ENCODE measurements at regions of chr1 and their contacts with region 1.

Region 1: GRCh38 chr1:117674521-117675397 is 68.9 kb downstream of the TENT5C start:
- DNase-seq: no peak
- ATAC-seq: no peak
- H3K4me3 ChIP-seq: no peak overlapping the region
- H3K27ac ChIP-seq: no peak overlapping the region
- H3K4me1 ChIP-seq: no peaks in the 10 kb centered on the region
- H3K27me3 ChIP-seq: no peaks in the 10 kb centered on the region
- CTCF ChIP-seq: 0 out of 2 replicates have a peak, but pooled peaks have one; percentile 6
- EP300 ChIP-seq: no peak
- POLR2A ChIP-seq: no peak
- RAD21 ChIP-seq: no peak

Region 2: DNA sequence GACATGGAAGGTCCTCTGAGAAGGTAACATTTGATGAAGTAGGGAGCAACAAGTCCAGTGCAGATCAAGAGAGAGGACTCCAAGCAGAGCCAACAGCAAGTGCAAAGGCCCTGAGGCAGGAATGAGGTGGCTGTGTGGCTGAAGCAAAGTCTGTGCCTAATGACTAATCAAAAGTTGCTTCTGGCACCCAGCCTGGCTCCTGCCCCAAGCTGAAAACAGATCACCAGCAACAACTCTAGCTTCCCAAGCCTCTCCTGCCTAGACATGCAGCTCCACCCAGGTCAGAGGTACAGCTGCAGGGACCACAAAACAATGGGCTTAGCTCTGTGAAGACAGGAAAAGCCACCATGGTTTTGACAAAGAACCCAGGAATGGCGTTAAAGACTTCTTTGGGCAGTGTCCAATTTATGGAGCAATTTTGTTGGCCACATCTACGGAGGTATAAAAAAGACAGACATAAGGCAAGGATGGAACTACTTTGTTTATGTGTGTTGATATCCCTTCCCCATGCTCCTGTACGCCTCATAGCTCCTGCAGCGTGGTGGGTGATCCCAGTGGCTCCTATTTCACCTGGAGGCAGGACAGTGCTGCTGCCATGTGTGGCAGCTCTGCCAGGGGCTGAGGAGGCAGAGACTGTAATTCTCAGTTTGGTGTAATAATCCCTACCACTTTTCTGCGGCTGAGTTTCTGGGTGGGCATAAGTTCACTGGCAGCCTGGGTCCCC is 980.8 kb before region 1 on chr1:
- CTCF ChIA-PET with region 1: no interaction called
- POLR2A ChIA-PET with region 1: no interaction called
- in situ Hi-C with region 1: no loop called
- intact Hi-C with region 1: no loop called
- DNase-seq: no peak
- ATAC-seq: no peak
- H3K4me3 ChIP-seq: no peak overlapping the region
- H3K27ac ChIP-seq: no peak overlapping the region
- H3K4me1 ChIP-seq: peaks cover 9% of the 10 kb centered on the region
- H3K27me3 ChIP-seq: no peaks in the 10 kb centered on the region; a peak in 1 of 5 replicates
- CTCF ChIP-seq: no peak
- EP300 ChIP-seq: no peak
- POLR2A ChIP-seq: no peak
- RAD21 ChIP-seq: no peak

Region 3: GRCh38 chr1:117512743-117513321 is 161.9 kb before region 1 on chr1:
- CTCF ChIA-PET with region 1: no interaction called
- POLR2A ChIA-PET with region 1: no interaction called
- in situ Hi-C with region 1: loop called (anchors 10 kb)
- intact Hi-C with region 1: no loop called
- DNase-seq: no peak
- ATAC-seq: no peak
- H3K4me3 ChIP-seq: no peak overlapping the region
- H3K27ac ChIP-seq: no peak overlapping the region
- H3K4me1 ChIP-seq: no peaks in the 10 kb centered on the region
- H3K27me3 ChIP-seq: no peaks in the 10 kb centered on the region
- CTCF ChIP-seq: peak; percentile 52
- EP300 ChIP-seq: no peak
- POLR2A ChIP-seq: no peak
- RAD21 ChIP-seq: peak; percentile 28; the same call in 1 of the 2 replicates

Region 4: GRCh38 chr1:117534995-117535467 is 139.7 kb before region 1 on chr1:
- CTCF ChIA-PET with region 1: no interaction called
- POLR2A ChIA-PET with region 1: no interaction called
- in situ Hi-C with region 1: no loop called
- intact Hi-C with region 1: loop called (anchors 5 kb)
- DNase-seq: peak; percentile 31
- ATAC-seq: peak; percentile 89
- H3K4me3 ChIP-seq: no peak overlapping the region
- H3K27ac ChIP-seq: no peak overlapping the region
- H3K4me1 ChIP-seq: peaks cover 5% of the 10 kb centered on the region; the same call in 1 of the 2 replicates
- H3K27me3 ChIP-seq: no peaks in the 10 kb centered on the region
- CTCF ChIP-seq: peak; percentile 71
- EP300 ChIP-seq: no peak
- POLR2A ChIP-seq: no peak
- RAD21 ChIP-seq: no peak; the same call in 1 of the 2 replicates

Region 5: DNA sequence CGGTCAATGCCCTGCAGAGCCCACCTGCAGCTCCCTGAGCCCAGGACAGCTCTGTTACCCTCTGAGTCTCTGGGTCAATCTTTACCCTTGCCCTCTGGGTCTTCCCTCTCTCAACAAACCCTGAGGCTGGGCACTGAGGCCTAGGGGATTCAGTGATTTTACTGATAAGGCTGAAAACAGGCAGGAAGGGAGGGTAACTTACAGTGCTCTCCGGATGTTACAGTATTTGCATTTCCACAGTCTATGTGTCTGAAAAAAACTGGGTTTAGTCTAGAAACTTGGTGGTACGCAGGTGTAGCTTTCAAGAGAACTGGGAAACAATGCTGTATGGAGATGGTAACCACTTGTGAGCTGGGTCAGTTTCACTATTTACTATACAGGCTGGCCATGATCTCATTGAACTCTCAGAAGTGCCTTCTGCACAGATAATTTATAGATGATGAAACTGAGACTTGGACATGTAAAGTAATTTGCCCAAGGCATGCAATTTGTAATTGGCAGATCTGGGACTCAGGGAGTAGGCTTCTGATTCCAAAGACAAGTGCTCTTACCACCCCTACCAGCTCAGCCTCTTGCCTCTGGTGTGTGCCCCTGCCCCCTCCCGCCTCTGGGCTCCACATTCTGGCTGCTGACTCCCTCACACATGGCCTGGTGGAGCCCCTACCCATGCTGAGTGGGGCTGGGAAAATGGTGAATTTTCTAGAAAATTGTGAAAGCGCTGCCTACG is 20.1 kb before region 1 on chr1:
- CTCF ChIA-PET with region 1: no interaction called
- POLR2A ChIA-PET with region 1: no interaction called
- in situ Hi-C with region 1: no loop called
- intact Hi-C with region 1: loop called (anchors 2 kb)
- DNase-seq: peak; percentile 8
- ATAC-seq: peak; percentile 42
- H3K4me3 ChIP-seq: no peak overlapping the region
- H3K27ac ChIP-seq: no peak overlapping the region
- H3K4me1 ChIP-seq: peaks cover 39% of the 10 kb centered on the region
- H3K27me3 ChIP-seq: peaks cover 1 to 10% of the 10 kb centered on the region in 2 experiments; a peak in 3 of 5 replicates
- CTCF ChIP-seq: no peak
- EP300 ChIP-seq: no peak
- POLR2A ChIP-seq: no peak
- RAD21 ChIP-seq: no peak